Activated CD4-positive, alpha-beta T cell treated with anti-CD3 and anti-CD28 coated beads, Interleukin-2, amount 10 ng/mL, durations not matched to agents 24 days and 14 days (primary cell): ENCODE measurements at regions of chr5 and their contacts with region 1.

Region 1: GRCh38 chr5:55994574-55995333 is at the start of gene IL6ST:
- DNase-seq: peak; percentile 99
- H3K4me3 Mint-ChIP-seq: peak within 1 kb of the TSS; percentile 93
- H3K27ac Mint-ChIP-seq: peak within 1 kb of the TSS; percentile 94
- H3K4me1 Mint-ChIP-seq: peaks cover 52% of the 10 kb centered on the region
- H3K27me3 Mint-ChIP-seq: no peaks in the 10 kb centered on the region
- total RNA-seq, gene IL6ST: 65.1 and 68.2 TPM in 2 replicates

Region 2: GRCh38 chr5:55724281-55724680 is 270.5 kb before region 1 on chr5:
- intact Hi-C with region 1: no loop called
- DNase-seq: no peak
- H3K4me3 Mint-ChIP-seq: no peak overlapping the region
- H3K27ac Mint-ChIP-seq: no peak overlapping the region
- H3K4me1 Mint-ChIP-seq: peaks cover 10% of the 10 kb centered on the region
- H3K27me3 Mint-ChIP-seq: peaks cover 4% of the 10 kb centered on the region

Region 3: DNA sequence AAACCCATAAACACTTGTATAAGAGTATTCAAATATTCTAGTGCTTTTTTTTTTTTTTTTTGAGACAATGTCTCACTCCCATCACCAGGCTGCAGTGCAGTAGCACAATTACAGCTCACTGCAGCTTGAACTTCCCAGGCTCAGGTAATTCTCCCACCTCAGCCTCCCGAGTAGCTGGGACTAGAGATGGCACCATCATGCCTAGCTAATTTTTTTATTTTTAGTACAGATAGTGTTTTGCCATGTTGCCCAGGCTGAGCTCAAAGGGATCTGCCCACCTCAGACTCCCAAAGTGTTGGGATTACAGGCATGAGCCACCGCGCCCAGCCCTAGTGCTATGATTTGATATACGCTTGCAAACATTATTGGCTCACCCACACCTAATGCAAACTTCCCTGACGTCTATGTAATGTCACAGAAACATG is 11.8 kb before region 1 on chr5:
- intact Hi-C with region 1: loop called (anchors 1 kb)
- DNase-seq: peak; percentile 73
- H3K4me3 Mint-ChIP-seq: peak overlapping the region; percentile 43
- H3K27ac Mint-ChIP-seq: peak overlapping the region; percentile 22
- H3K4me1 Mint-ChIP-seq: peaks cover 61% of the 10 kb centered on the region
- H3K27me3 Mint-ChIP-seq: no peaks in the 10 kb centered on the region

Region 4: GRCh38 chr5:56026863-56027300 is 32.1 kb after region 1 on chr5:
- intact Hi-C with region 1: loop called (anchors 1 kb)
- DNase-seq: no peak
- H3K4me3 Mint-ChIP-seq: no peak overlapping the region
- H3K27ac Mint-ChIP-seq: no peak overlapping the region
- H3K4me1 Mint-ChIP-seq: peaks cover 10% of the 10 kb centered on the region
- H3K27me3 Mint-ChIP-seq: peaks cover 23% of the 10 kb centered on the region

Region 5: DNA sequence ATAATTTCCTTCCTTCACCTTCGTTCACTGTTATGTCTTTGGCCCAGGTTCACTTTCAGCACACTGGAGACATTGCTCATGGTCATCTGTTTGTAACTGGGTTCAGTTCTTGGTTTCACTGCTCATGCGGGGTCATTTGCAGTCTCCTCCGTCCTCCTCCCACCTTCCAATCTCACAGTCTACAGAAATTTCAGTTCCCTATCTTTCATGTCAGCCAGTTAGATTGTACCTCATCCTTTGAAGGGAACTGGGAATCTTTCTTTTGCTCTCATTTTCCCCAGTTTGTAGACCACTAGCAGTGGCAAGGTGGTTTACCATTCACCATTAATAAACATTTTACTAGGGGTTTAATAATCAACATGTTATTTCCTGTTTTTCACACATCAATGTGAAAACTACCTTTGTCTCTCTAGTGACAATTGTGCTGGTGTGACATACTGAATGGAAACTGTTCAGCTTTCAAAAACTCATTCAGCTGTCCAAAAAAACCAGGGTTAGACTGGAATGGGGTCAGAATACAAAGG is 100.9 kb after region 1 on chr5:
- intact Hi-C with region 1: loop called (anchors 10 kb)
- DNase-seq: no peak
- H3K4me3 Mint-ChIP-seq: peak overlapping the region; percentile 28
- H3K27ac Mint-ChIP-seq: peak overlapping the region; percentile 12
- H3K4me1 Mint-ChIP-seq: peaks cover 64% of the 10 kb centered on the region
- H3K27me3 Mint-ChIP-seq: no peaks in the 10 kb centered on the region

Region 6: DNA sequence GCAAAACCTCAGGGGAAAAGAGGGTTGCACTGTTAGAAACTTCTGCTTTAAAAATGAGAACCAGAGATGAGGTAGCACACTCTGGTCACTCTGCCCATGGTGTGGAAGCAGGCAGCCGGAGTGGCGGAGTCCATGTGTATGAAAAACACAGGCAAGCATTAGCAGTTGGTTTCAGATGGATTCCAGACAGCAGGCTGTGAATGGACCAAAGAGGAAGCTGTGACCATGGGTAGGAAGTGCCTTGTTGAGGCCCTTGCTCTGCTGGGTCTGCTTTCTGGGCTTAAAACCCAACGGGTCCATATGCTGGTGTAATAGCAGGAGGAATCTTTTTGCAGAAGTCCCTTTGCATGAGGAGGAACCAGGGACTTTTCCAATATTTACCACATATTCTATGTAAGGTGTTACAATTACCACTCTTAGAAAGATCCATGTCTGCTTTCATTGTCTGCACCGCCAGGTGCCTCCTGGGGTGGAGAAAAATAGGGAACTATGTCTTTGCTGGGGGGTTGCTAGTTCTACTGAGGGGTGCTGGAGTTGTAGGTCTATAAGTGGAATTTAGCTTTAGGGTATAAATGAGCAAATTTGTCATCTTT is 161.3 kb after region 1 on chr5:
- intact Hi-C with region 1: loop called (anchors 2 kb)
- DNase-seq: peak; percentile 66
- H3K4me3 Mint-ChIP-seq: peak overlapping the region; percentile 44
- H3K27ac Mint-ChIP-seq: peak overlapping the region; percentile 92
- H3K4me1 Mint-ChIP-seq: peaks cover 74% of the 10 kb centered on the region
- H3K27me3 Mint-ChIP-seq: no peaks in the 10 kb centered on the region

Region 7: DNA sequence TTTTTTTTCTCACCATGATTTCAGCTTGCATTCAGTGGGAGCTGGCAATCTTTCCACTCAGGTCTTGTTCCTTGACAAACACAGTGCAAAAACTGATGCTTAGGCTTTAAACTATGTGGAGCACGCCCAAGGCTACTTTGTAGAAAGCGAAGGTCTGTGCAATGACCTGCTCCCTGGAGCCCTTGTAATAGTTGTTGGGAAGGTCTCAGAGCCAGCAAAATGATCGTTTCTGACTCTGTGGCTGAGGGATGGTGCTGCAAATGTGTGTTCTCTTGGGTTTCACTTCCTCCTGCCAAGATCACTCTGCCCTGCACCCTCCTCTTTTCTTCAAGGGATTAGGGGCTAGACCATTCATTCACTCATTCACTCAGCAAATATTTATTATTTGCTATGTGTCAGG is 570.9 kb after region 1 on chr5:
- intact Hi-C with region 1: no loop called
- DNase-seq: no peak
- H3K4me3 Mint-ChIP-seq: no peak overlapping the region
- H3K27ac Mint-ChIP-seq: no peak overlapping the region
- H3K4me1 Mint-ChIP-seq: peaks cover 12% of the 10 kb centered on the region
- H3K27me3 Mint-ChIP-seq: peaks cover 10% of the 10 kb centered on the region

Region 8: DNA sequence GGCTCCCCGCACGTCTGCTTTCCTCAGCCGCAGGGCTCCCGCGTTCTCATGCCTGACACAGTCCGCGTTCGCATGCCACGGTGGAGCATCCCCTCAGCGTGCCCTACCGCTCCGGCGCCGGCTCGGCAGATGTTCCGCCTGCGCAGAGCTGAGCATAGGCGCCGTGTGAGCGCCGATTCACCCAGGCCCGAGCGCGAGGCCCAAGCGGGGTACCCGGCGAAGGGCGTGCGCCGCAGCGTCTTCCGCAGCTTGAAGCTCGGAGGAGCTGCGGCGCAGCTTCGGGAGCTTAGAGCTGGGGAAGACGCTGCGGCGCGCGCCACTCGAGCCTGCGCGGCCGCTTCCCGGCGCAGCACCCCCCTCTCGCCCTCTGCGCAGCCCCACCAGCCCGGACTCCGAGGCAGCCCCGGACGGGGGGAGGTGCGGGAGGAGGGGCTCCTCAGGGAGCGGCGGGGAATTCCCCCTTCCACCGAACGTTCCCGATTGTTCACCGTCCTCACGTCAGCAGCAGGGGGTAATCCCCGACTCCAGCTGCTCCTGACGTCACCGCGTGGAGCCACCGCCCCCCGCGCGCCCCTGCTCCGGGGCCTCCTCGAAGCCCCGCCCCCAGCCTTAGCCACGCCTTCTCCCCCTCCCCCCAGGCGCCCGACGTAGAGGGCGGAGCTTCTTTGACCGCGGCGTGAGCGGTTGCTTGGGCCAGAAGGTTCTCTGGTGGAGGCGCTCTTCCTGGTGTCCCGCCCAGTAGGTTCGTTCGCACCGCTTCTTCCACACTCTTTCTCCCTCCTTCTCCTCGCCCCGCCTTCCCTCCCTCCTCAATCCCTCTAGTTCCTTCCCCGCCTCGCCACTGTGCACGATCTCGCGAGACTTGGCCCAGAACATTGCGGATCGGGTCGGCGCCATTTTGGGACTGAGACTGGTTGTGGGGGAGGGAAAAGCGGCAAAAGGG is 1178.7 kb after region 1 on chr5 and contains the start of gene GPBP1:
- intact Hi-C with region 1: loop called (anchors 10 kb)
- DNase-seq: peak; percentile 99
- H3K4me3 Mint-ChIP-seq: peak within 1 kb of the TSS; percentile 97
- H3K27ac Mint-ChIP-seq: peak within 1 kb of the TSS; percentile 99
- H3K4me1 Mint-ChIP-seq: peaks cover 30% of the 10 kb centered on the region
- H3K27me3 Mint-ChIP-seq: peaks cover 2% of the 10 kb centered on the region
- total RNA-seq, gene GPBP1: 85.2 and 86.7 TPM in 2 replicates